HCT116 (cell line): ENCODE measurements at regions of chr7 and their contacts with region 1.

Region 1: GRCh38 chr7:133011746-133012145 is 70.1 kb downstream of the CHCHD3 start:
- DNase-seq: no peak
- ATAC-seq: no peak
- H3K4me3 ChIP-seq: no peak overlapping the region
- H3K27ac ChIP-seq: no peak overlapping the region
- H3K4me1 ChIP-seq: no peaks in the 10 kb centered on the region
- H3K27me3 ChIP-seq: no peaks in the 10 kb centered on the region
- CTCF ChIP-seq: no peak
- POLR2A ChIP-seq: no peak
- RAD21 ChIP-seq: no peak

Region 2: DNA sequence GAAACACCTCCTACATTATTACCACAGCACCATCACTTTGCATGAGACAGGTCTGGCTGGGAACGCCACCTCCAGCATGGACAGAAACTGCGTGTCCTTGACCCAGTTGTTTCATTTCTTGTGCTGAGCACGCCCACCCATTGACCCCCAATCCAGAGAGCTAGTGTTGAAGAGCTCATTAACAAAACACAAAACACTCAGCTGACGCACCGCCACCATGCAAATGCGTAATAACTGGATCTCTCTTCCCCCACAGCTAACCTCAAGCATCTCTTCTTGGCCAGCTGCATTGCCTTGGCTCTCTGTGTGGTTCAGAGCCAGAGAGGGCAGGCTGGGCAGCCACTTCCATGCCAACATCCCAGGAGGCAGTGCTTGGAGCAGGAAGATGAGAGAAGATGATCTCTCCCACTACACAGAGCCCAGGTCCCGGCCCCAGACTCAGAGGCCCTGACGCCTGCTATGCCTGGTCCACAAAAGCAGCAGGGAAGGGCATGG is 608.9 kb before region 1 on chr7:
- CTCF ChIA-PET with region 1: no interaction called
- POLR2A ChIA-PET with region 1: no interaction called
- RAD21 ChIA-PET with region 1: no interaction called
- intact Hi-C with region 1: no loop called
- DNase-seq: no peak
- ATAC-seq: no peak
- H3K4me3 ChIP-seq: no peak overlapping the region
- H3K27ac ChIP-seq: no peak overlapping the region
- H3K4me1 ChIP-seq: no peaks in the 10 kb centered on the region
- H3K27me3 ChIP-seq: peaks cover 16% of the 10 kb centered on the region; the same call in 1 of the 2 replicates
- CTCF ChIP-seq: no peak
- POLR2A ChIP-seq: no peak
- RAD21 ChIP-seq: no peak

Region 3: GRCh38 chr7:132603220-132603833 is 408.4 kb before region 1 on chr7:
- CTCF ChIA-PET with region 1: no interaction called
- POLR2A ChIA-PET with region 1: no interaction called
- RAD21 ChIA-PET with region 1: no interaction called
- intact Hi-C with region 1: no loop called
- DNase-seq: no peak
- ATAC-seq: no peak
- H3K4me3 ChIP-seq: no peak overlapping the region
- H3K27ac ChIP-seq: no peak overlapping the region
- H3K4me1 ChIP-seq: no peaks in the 10 kb centered on the region
- H3K27me3 ChIP-seq: peaks cover 55% of the 10 kb centered on the region
- CTCF ChIP-seq: peak in 1 of 3 experiments; percentile 18; a peak in 1 of 6 replicates
- POLR2A ChIP-seq: no peak
- RAD21 ChIP-seq: no peak

Region 4: DNA sequence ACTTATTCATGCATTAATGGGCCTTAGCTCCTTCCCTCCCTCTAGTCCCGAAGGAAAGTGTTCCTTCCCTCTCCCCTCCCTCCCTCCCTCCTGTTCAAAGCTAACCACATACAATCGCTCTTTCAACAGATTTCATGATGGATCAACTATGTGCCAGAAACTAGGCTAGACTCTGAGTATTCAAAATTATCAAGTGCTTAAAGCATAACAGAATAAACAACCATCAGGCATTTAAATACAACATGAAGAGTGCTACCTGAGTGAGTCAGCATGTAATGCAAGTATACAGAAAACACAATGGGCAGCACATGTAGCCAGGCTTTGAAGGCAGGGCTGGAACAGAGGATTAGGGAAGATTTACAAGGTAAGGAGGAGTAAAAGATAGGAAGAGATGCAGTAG is 58.8 kb after region 1 on chr7:
- CTCF ChIA-PET with region 1: no interaction called
- POLR2A ChIA-PET with region 1: no interaction called
- RAD21 ChIA-PET with region 1: no interaction called
- intact Hi-C with region 1: loop called (anchors 2 kb)
- DNase-seq: no peak
- ATAC-seq: no peak
- H3K4me3 ChIP-seq: no peak overlapping the region
- H3K27ac ChIP-seq: no peak overlapping the region
- H3K4me1 ChIP-seq: no peaks in the 10 kb centered on the region
- H3K27me3 ChIP-seq: no peaks in the 10 kb centered on the region
- CTCF ChIP-seq: no peak
- POLR2A ChIP-seq: no peak
- RAD21 ChIP-seq: no peak